Endothelial cell of umbilical vein (primary cell): ENCODE measurements at regions of chr10 and their contacts with region 1.

Region 1: GRCh38 chr10:53839440-53840039 is 961.5 kb downstream of the PCDH15 start:
- DNase-seq: peak; percentile 54
- H3K4me3 ChIP-seq: no peak overlapping the region
- H3K27ac ChIP-seq: no peak overlapping the region
- H3K4me1 ChIP-seq: no peaks in the 10 kb centered on the region
- H3K27me3 ChIP-seq: no peaks in the 10 kb centered on the region
- CTCF ChIP-seq: peak in 1 of 2 donors; percentile 30
- POLR2A ChIP-seq: no peak

Region 2: DNA sequence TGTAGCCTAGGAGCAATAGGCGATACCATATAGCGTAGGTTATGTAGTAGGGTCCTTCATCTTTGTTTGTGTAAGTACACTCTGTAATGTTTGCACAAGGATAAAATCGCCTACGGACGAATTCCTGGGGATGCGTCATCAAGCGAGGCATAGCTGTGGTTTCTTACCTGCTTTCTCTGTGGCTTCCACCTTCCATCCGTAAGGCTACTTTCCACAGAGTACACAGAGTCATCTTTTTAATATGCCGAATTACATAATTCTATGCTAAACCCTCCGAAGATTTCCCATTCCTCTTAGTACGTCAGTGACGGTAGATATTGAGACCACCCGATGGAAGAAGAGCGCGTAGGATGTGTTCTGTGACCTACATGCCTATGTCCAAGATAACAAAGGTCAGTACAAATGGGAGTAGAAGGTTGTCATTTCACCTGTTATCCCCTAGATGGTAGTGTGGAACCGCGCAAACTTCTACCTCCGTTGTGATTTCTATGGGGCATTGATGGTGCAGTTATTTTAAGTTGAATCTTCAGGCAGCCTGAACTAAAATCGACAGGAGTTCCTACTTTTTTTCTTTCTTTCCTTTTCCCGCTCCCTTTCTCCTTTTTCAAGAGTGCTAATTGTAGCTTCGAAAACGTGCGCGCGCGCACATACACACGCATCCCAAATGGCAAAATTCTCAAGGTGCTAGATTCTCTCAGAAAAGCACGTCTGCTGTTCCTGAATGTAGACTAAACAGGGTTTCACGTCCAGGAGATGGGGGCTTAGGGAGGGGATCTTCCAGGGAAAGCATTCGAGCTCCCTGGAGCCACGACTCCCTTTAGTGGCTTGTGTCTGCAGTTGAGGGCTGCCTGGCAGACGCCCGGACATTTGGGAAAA is 955.3 kb before region 1 on chr10:
- CTCF ChIA-PET with region 1: no interaction called
- POLR2A ChIA-PET with region 1: no interaction called
- dilution Hi-C with region 1: no loop called
- intact Hi-C with region 1: loop called (anchors 10 kb)
- DNase-seq: peak; percentile 67
- H3K4me3 ChIP-seq: no peak overlapping the region
- H3K27ac ChIP-seq: no peak overlapping the region
- H3K4me1 ChIP-seq: peaks cover 17% of the 10 kb centered on the region
- H3K27me3 ChIP-seq: peaks cover 0 to 6% of the 10 kb centered on the region in 2 experiments
- CTCF ChIP-seq: peak; percentile 70 to 72
- POLR2A ChIP-seq: no peak

Region 3: GRCh38 chr10:52951824-52952223 is 887.7 kb before region 1 on chr10:
- CTCF ChIA-PET with region 1: interaction called, 4 read pairs
- POLR2A ChIA-PET with region 1: no interaction called
- dilution Hi-C with region 1: no loop called
- intact Hi-C with region 1: loop called (anchors 10 kb)
- DNase-seq: peak; percentile 73
- H3K4me3 ChIP-seq: no peak overlapping the region
- H3K27ac ChIP-seq: no peak overlapping the region
- H3K4me1 ChIP-seq: no peaks in the 10 kb centered on the region
- H3K27me3 ChIP-seq: no peaks in the 10 kb centered on the region
- CTCF ChIP-seq: peak; percentile 55 to 71
- POLR2A ChIP-seq: no peak

Region 4: GRCh38 chr10:53209944-53210611 is 629.5 kb before region 1 on chr10:
- CTCF ChIA-PET with region 1: no interaction called
- POLR2A ChIA-PET with region 1: no interaction called
- dilution Hi-C with region 1: no loop called
- intact Hi-C with region 1: loop called (anchors 5 kb)
- DNase-seq: peak; percentile 51
- H3K4me3 ChIP-seq: no peak overlapping the region
- H3K27ac ChIP-seq: no peak overlapping the region
- H3K4me1 ChIP-seq: no peaks in the 10 kb centered on the region
- H3K27me3 ChIP-seq: no peaks in the 10 kb centered on the region
- CTCF ChIP-seq: peak; percentile 13 to 14
- POLR2A ChIP-seq: no peak

Region 5: GRCh38 chr10:54454271-54454670 is 614.7 kb after region 1 on chr10:
- CTCF ChIA-PET with region 1: no interaction called
- POLR2A ChIA-PET with region 1: no interaction called
- dilution Hi-C with region 1: no loop called
- intact Hi-C with region 1: no loop called
- DNase-seq: no peak
- H3K4me3 ChIP-seq: no peak overlapping the region
- H3K27ac ChIP-seq: no peak overlapping the region
- H3K4me1 ChIP-seq: no peaks in the 10 kb centered on the region
- H3K27me3 ChIP-seq: no peaks in the 10 kb centered on the region
- CTCF ChIP-seq: no peak
- POLR2A ChIP-seq: no peak